ENCODE measurements at regions of chr9 and their contacts with region 1.

Region 1: DNA sequence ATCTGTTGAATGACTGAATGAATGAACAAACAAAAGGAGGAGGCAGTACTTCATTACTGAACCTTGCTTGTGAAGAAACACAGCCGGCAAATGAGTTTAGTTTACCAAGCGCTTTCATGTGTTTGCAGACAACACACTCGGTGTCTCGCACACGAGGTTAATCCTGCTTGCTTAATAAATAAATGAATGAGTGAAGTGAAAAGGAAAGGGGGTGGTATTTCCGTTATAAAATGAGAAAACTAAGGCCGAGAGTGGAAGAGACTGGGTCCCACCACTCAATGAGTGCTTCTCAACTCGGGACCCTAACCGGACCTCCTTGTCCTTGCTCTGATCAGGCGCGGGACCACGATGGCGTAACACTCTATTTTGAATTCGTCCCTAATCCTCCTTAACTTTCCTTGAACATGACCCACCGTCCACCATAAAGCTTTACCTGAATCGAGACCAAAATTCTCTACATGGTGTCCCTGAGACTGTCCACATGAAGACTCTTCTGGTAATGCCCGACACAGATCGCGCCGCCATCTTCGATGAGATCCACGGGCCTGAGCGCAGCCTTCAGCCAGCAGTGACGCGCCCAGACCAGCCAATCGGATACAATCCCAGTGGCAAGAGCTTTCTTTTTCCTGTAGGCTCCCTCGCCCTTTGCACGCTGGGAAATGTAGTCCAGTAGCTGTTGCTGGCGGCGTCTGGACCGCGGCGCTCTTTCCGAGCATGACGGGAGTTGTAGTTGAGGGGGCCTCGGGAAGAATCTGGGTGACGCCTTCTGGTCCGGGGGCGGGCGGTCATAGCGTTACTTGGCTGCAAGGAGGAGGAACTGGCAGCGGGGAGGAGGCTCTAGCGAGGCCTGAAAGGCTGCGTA is at the starts of genes MRPL50 and ZNF189:
- DNase-seq: peak; percentile 94 to 100
- ATAC-seq: peak; percentile 97 to 99 (median 99)
- H3K4me3 ChIP-seq: peak within 1 kb of the TSS; percentile 61 to 77 (median 70)
- H3K27ac ChIP-seq: peak within 1 kb of the TSS; percentile 82 to 96 (median 90)
- H3K4me1 ChIP-seq: peaks cover 0 to 62% (median 42%) of the 10 kb centered on the region in 9 donors
- H3K27me3 ChIP-seq: no peaks in the 10 kb centered on the region
- CTCF ChIP-seq: no peak
- total RNA-seq, gene MRPL50: 12.2 to 20.6 (median 16.6) TPM
- total RNA-seq, gene ZNF189: 16.3 to 28.0 (median 20.5) TPM

Region 2: DNA sequence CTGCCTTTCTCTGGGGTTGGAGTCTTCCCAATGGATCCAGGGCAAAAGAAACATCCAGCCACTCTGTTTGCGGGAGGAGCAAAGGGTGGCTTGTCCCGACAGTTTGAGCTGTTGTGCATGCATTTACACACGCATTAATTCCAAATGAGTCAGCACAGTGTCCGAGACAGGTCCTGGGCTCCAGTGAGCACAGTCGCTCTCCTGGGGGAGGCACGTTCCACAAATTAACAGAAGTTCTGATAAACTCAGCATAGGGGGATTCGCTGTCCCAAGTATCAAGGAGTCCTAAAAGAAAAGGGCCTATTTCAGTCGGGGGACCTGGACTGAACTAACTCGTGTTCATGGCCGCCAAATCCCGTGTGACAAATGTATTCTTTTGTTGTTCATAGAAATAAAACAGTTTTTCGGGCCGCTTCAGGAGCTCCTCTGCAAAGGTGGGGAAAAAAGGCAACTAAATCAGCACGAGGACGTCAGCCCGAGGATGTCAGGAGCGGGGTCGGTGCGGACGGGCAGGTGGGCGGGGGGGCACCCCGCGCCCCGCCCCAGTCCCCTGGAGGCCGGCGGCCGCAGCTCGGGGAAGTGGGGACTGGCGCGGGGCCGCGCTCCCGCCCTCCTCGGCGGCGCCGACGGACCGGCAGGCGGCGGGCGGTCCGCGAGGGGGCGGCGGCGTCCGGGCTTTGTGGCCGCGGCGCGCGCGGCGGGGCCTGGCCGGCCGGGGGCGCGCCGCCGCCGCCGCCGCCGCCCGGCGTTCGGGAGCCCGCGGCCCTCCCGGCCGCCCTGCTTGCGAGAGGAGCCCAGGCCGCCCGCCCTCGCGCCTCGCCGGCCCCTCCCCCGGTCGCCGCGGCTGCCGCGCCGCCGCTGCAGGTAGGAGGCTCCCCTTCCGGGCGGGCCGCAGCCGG is 971.5 kb before region 1 on chr9 and contains the start of gene MSANTD3:
- intact Hi-C with region 1: loop called in 1 of 10 experiments (anchors 5 kb)
- DNase-seq: peak; percentile 55 to 73
- ATAC-seq: peak; percentile 82 to 92 (median 87)
- H3K4me3 ChIP-seq: peak within 1 kb of the TSS; percentile 72 to 99 (median 91)
- H3K27ac ChIP-seq: peak within 1 kb of the TSS; percentile 61 to 94 (median 88)
- H3K4me1 ChIP-seq: peaks cover 4 to 36% (median 28%) of the 10 kb centered on the region in 9 donors
- H3K27me3 ChIP-seq: no peaks in the 10 kb centered on the region
- CTCF ChIP-seq: peak in 3 of 9 donors; percentile 27 to 39 (median 31)
- total RNA-seq, gene MSANTD3: 11.9 to 32.2 (median 20.1) TPM

Region 3: GRCh38 chr9:101315129-101315459 is 83.2 kb before region 1 on chr9:
- intact Hi-C with region 1: no loop called
- DNase-seq: no peak
- ATAC-seq: no peak
- H3K4me3 ChIP-seq: no peak overlapping the region
- H3K27ac ChIP-seq: no peak overlapping the region
- H3K4me1 ChIP-seq: peaks cover 0 to 5% (median 0%) of the 10 kb centered on the region in 9 donors
- H3K27me3 ChIP-seq: peaks cover 0 to 14% (median 4%) of the 10 kb centered on the region in 7 donors
- CTCF ChIP-seq: no peak

Region 4: DNA sequence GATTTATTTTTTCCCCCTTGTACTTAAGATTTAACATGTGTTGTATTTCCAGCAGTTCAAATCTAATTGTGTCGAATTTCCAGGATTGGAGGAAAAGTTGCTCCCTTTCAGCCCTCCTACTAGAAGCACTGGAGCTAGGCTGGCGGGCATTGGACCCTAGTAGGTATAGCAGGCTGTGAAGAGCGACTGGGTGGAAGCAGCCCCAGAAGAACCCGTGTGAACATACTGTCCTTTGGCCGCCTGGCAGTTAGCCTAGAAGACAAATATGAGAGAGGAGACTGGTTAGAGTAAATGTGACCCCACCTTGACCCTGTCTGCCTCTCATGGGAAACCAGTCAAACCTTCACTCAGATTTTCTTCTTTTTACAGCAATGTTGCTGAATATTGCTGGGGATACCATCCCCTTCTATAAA is 23.4 kb after region 1 on chr9:
- intact Hi-C with region 1: no loop called
- DNase-seq: peak; percentile 10 to 20
- ATAC-seq: peak in 6 of 8 donors; percentile 20 to 48 (median 34)
- H3K4me3 ChIP-seq: no peak overlapping the region
- H3K27ac ChIP-seq: no peak overlapping the region
- H3K4me1 ChIP-seq: peaks cover 0 to 15% (median 0%) of the 10 kb centered on the region in 9 donors
- H3K27me3 ChIP-seq: no peaks in the 10 kb centered on the region
- CTCF ChIP-seq: no peak

Region 5: DNA sequence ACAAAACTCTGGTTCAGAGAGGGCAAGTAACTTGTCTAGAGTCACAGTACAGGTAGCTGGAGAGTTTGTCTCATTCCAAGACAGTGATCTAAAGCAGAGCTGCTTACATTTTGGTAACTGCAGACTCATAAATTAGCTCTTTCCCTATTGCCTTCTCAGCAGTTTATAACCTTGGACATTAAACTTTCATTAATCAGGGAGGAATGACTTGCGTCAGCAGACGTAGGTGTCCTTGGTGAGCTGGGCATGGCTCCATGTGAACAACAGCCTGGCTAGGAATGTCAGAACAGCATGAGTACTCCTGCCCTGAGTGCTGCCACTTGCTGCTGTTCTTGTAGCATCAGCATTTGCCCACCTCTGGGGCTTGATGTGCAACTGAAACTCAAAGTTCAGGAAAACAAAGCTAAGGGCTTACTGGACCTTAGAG is 39.5 kb after region 1 on chr9:
- intact Hi-C with region 1: loop called in 3 of 10 experiments (anchors 2 to 5 kb)
- DNase-seq: peak; percentile 55 to 60
- ATAC-seq: peak; percentile 61 to 96 (median 91)
- H3K4me3 ChIP-seq: no peak overlapping the region
- H3K27ac ChIP-seq: peak overlapping the region in 5 of 10 donors; percentile 22 to 63 (median 34)
- H3K4me1 ChIP-seq: peaks cover 0 to 14% (median 0%) of the 10 kb centered on the region in 9 donors
- H3K27me3 ChIP-seq: no peaks in the 10 kb centered on the region
- CTCF ChIP-seq: no peak

Region 6: GRCh38 chr9:101443364-101443771 is 45.1 kb after region 1 on chr9:
- intact Hi-C with region 1: loop called in 5 of 10 experiments (anchors 2 to 5 kb)
- DNase-seq: peak; percentile 55 to 81
- ATAC-seq: peak; percentile 84 to 98 (median 94)
- H3K4me3 ChIP-seq: no peak overlapping the region
- H3K27ac ChIP-seq: peak overlapping the region in 9 of 10 donors; percentile 8 to 65 (median 46)
- H3K4me1 ChIP-seq: peaks cover 0 to 21% (median 7%) of the 10 kb centered on the region in 9 donors
- H3K27me3 ChIP-seq: peaks cover 0 to 8% (median 0%) of the 10 kb centered on the region in 7 donors
- CTCF ChIP-seq: no peak

Region 7: GRCh38 chr9:101449140-101449721 is 50.9 kb after region 1 on chr9:
- intact Hi-C with region 1: loop called in 4 of 10 experiments (anchors 2 to 5 kb)
- DNase-seq: peak; percentile 61 to 74
- ATAC-seq: peak; percentile 94 to 99 (median 98)
- H3K4me3 ChIP-seq: peak overlapping the region in 9 of 10 donors; percentile 46 to 66 (median 57)
- H3K27ac ChIP-seq: peak overlapping the region in 8 of 10 donors; percentile 57 to 86 (median 76)
- H3K4me1 ChIP-seq: peaks cover 0 to 20% (median 6%) of the 10 kb centered on the region in 9 donors
- H3K27me3 ChIP-seq: peaks cover 0 to 33% (median 0%) of the 10 kb centered on the region in 7 donors
- CTCF ChIP-seq: peak; percentile 26 to 79 (median 61)

Region 8: DNA sequence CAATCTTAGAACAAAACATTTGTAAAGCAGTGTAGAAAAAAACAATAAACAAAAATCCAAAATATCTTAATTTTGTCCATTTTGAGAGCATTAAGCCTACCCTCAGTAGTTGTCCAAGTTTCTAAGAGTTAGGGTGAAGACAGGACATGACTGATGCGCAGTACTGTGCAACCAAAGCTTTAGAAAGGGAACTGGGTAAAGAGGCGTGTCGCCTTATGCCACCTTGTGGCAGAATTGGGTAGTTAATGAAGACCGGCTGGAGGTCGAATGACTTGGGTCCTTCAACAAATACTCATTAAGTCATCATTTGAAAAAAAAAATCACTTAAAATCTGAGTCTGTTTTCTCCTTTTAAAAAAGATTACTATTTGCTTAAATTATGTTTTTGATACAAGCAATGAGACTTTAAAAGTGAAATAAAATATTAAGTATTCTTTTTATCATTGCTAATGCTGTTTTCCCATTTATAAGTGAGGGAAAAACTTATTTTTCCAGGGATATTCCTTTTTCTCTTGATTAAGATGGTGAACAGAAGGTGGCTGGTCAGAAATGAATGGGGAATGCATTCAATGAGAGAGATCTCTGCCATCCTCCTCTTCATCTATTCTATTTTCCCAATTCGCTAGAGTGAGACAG is 131.9 kb after region 1 on chr9:
- intact Hi-C with region 1: loop called in 8 of 10 experiments (anchors 1 to 10 kb)
- DNase-seq: peak in 1 of 2 donors; percentile 71
- ATAC-seq: peak in 7 of 8 donors; percentile 26 to 51 (median 40)
- H3K4me3 ChIP-seq: no peak overlapping the region
- H3K27ac ChIP-seq: no peak overlapping the region
- H3K4me1 ChIP-seq: peaks cover 0 to 27% (median 16%) of the 10 kb centered on the region in 9 donors
- H3K27me3 ChIP-seq: no peaks in the 10 kb centered on the region
- CTCF ChIP-seq: peak; percentile 74 to 92 (median 85)